ENCODE measurements at regions of chr6 and their contacts with region 1.

Region 1: GRCh38 chr6:2841264-2842138 is at the start of gene SERPINB1:
- DNase-seq: peak; percentile 95
- ATAC-seq: peak; percentile 92
- total RNA-seq, gene SERPINB1: 25.4 TPM

Region 2: DNA sequence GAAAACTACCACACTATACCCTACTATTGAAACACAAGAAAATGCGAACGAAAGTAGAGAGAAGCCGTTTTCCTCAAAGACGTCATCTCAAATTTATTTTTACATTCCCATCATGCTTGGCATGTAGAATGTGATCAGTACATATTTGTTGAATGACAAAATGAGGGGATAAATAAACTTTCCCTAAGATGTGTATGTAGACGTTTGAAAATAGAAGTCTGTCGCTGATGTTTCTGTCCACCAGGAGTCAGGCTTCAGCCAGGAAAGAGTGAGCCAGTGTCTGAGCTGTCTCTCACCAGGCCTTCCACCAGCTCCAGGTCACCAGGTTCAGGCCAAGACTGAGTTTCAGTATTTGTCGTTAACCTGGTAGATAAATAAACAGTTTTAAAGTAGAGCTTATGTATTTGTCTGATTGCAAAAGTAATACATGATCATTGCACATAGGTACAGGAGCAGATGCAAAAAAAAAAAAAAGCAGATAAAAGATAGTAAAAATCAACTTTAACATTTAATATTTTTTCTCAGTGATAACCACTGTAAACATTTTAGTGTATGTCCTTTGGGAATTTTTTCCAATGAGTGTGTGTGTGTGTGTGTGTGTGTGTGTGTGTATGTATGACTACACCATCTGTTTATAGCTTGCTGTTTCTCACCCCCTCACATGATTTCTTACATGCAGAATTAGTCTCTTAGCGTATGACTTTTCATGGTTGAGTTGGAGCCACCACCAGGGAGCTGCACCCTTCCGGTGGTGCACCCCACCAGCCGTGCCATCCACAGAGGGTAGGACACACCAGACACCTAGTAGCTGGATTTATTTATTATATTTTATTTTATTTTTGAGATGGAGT is 50.2 kb before region 1 on chr6:
- intact Hi-C with region 1: loop called (anchors 10 kb)
- DNase-seq: peak; percentile 54
- ATAC-seq: peak; percentile 88

Region 3: GRCh38 chr6:2931970-2932748 is 90.7 kb after region 1 on chr6:
- intact Hi-C with region 1: loop called (anchors 5 kb)
- DNase-seq: peak; percentile 83
- ATAC-seq: peak; percentile 96

Measured in left ventricle myocardium superior (tissue), 1 donor.